Heart left ventricle (tissue), 16 donors: ENCODE measurements at regions of chr9 and their contacts with region 1.

Region 1: DNA sequence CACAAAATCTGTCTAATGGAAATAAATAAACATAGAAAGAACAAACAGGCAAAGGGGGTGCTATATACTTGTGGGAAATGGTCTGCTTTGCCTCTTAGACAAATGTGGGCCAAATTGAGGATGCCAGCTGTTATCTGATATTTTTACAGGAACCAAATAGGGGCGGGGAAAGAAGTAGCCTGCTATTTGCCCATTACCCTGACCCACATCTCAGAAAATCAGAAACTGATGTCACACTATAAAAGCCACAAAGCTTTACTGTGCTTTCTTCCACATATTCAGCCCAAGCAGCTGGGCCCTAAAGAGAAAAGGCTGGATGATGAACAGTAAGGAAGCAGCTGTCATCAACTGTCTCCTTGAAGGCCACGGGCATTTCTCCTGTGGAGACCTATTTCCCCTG is 97.3 kb downstream of the ELAVL2 start:
- DNase-seq: no peak
- ATAC-seq: no peak
- H3K4me3 ChIP-seq: no peak overlapping the region
- H3K27ac ChIP-seq: no peak overlapping the region
- H3K4me1 ChIP-seq: no peaks in the 10 kb centered on the region
- H3K27me3 ChIP-seq: no peaks in the 10 kb centered on the region
- CTCF ChIP-seq: no peak
- POLR2A ChIP-seq: no peak

Region 2: DNA sequence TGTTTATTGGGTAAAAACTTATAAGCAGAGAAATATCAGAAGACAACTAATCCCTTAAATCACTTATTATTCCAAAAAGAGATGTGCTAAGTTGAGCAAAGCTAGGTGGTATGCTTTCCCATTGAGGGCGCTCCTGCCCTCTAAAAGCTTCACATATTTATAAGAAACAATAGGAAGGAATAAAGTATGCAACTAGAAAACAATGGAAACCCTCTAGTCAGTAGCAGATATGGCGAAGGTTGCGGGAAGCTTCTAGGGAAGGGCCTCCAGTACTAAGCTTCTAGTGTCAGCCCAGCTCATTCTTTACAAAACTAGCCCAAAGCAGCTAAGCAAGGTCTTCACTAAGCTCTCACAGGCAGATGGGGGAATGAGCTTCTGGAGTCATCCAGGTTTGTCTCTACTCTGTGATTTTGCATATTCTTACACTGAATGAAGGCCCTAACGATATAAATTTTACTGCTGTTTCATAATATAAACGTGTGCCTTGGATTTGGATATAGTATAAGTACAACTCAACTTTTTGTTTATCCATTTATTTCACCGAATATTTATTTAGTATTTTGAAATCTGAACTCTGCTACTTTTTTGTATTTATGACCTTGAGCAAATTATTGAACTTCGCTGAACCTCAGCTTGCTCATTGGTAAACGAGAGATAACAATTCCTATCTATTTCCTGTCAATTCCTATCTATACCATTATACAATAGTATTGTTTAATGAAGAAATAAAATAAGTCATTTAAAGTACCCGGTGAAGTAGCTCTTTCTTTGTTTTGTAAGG is 474.1 kb before region 1 on chr9:
- intact Hi-C with region 1: no loop called
- DNase-seq: no peak
- ATAC-seq: no peak
- H3K4me3 ChIP-seq: no peak overlapping the region
- H3K27ac ChIP-seq: no peak overlapping the region
- H3K4me1 ChIP-seq: no peaks in the 10 kb centered on the region
- H3K27me3 ChIP-seq: no peaks in the 10 kb centered on the region
- CTCF ChIP-seq: no peak
- POLR2A ChIP-seq: no peak

Region 3: DNA sequence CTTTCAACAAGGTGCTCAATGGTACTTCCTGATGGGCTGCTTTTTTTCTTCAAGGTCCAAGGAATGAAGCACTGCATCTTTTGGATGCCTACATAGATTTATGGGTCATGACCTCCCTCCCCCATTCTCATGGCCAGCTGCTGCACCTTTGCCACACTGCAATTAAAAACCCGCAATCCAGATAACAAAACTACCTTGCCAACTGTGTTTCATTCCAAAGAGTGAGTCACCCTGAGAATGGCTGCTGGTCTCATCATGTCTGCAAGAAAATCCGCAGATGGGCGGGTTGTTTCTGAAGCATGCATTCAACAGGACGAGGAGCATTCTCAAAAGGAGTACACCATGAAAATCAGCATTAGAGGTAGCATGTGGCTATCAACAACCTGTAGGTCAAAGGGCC is 42.5 kb before region 1 on chr9:
- intact Hi-C with region 1: loop called in 1 of 10 experiments (anchors 5 kb)
- DNase-seq: no peak
- ATAC-seq: no peak
- H3K4me3 ChIP-seq: no peak overlapping the region
- H3K27ac ChIP-seq: no peak overlapping the region
- H3K4me1 ChIP-seq: peaks cover 0 to 9% (median 0%) of the 10 kb centered on the region in 12 donors
- H3K27me3 ChIP-seq: no peaks in the 10 kb centered on the region
- CTCF ChIP-seq: no peak
- POLR2A ChIP-seq: no peak

Region 4: GRCh38 chr9:23779220-23779619 is 50.5 kb after region 1 on chr9:
- intact Hi-C with region 1: loop called in 1 of 10 experiments (anchors 10 kb)
- DNase-seq: no peak
- ATAC-seq: peak in 2 of 4 donors; percentile 39 to 52
- H3K4me3 ChIP-seq: no peak overlapping the region
- H3K27ac ChIP-seq: no peak overlapping the region
- H3K4me1 ChIP-seq: peaks cover 0 to 10% (median 0%) of the 10 kb centered on the region in 12 donors
- H3K27me3 ChIP-seq: no peaks in the 10 kb centered on the region
- CTCF ChIP-seq: no peak
- POLR2A ChIP-seq: no peak